ENCODE measurements at regions of chr1 and their contacts with region 1.

Region 1: GRCh38 chr1:36450270-36450918 is at the start of gene OSCP1:
- DNase-seq: peak; percentile 91
- ATAC-seq: peak; percentile 98
- H3K4me3 Mint-ChIP-seq: peak within 1 kb of the TSS; percentile 83
- H3K27ac Mint-ChIP-seq: peak within 1 kb of the TSS; percentile 83
- H3K4me1 Mint-ChIP-seq: peaks cover 16% of the 10 kb centered on the region
- H3K27me3 Mint-ChIP-seq: no peaks in the 10 kb centered on the region
- total RNA-seq, gene OSCP1: 2.2 to 2.8 TPM

Region 2: GRCh38 chr1:35577071-35577998 is 873.1 kb before region 1 on chr1:
- CTCF ChIA-PET with region 1: no interaction called
- POLR2A ChIA-PET with region 1: no interaction called
- intact Hi-C with region 1: loop called in 1 of 2 experiments (anchors 10 kb)
- DNase-seq: peak; percentile 74
- ATAC-seq: peak; percentile 83
- H3K4me3 Mint-ChIP-seq: peak overlapping the region; percentile 63
- H3K27ac Mint-ChIP-seq: peak overlapping the region; percentile 80
- H3K4me1 Mint-ChIP-seq: peaks cover 20% of the 10 kb centered on the region
- H3K27me3 Mint-ChIP-seq: peaks cover 12% of the 10 kb centered on the region

Region 3: DNA sequence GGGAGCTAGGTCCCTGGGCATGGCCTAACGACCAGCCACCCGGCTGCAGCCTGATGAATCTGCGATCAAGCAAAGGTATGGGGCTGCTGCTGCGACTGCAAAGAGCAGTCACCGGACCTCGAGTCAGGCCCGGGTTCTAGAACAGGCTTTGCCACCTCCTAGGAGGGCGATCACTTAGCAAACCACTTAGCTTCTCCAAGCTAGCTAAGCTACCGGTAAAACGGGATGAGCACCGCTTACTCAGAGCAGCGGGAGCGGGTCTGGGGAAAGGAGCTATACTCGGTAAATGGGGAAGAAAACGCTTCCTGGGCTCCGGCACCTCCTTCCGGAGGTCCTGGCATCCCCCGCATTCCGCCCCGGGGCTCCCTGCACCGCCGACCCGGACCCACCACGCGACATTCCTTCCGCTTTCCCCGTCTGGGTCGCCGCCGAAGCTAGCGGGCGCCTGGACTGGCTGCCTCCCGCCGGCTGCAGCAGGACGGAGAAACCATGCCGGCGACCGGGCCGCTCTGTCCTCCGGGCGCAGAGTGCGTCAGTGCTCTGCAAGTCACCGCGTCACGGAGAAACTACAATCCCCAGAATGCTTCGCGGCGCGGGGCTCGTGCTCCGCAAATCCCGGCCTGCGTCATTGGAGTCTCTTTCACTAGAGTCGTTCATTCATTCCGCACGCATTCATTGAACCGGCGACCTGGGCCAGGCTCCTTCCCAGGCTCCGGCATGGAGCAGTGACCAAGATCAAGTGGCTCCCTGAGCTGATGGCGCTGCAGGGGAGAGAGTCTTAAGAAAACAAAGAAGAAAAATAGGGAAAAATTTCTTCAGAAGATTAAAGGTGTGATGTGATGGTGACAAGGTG is 52.8 kb before region 1 on chr1 and contains the start of gene LSM10:
- CTCF ChIA-PET with region 1: no interaction called
- POLR2A ChIA-PET with region 1: no interaction called
- intact Hi-C with region 1: loop called in 1 of 2 experiments (anchors 1 kb)
- DNase-seq: peak; percentile 96
- ATAC-seq: peak; percentile 89
- H3K4me3 Mint-ChIP-seq: peak within 1 kb of the TSS; percentile 90
- H3K27ac Mint-ChIP-seq: peak within 1 kb of the TSS; percentile 99
- H3K4me1 Mint-ChIP-seq: peaks cover 25% of the 10 kb centered on the region
- H3K27me3 Mint-ChIP-seq: no peaks in the 10 kb centered on the region
- total RNA-seq, gene LSM10: 40.6 to 44.0 TPM

Region 4: DNA sequence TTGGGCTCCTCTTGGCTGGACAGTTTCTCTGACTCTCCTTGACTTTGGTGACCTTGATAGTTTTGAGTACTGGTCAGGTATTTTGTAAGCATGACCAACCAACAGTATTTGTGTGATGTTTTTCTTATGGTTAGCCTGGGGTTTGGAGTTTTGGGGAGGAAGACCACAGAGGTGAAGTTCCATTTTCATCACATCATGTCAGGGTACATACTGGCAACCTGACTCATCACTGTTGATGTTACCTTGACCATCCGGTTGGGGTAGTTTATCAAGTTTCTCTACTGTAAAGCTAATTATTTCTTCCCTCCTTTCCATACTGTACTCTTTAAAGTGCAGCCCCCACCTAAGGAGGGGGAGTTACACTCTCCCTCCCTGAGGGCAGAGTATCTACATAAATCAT is 13.6 kb before region 1 on chr1:
- CTCF ChIA-PET with region 1: no interaction called
- POLR2A ChIA-PET with region 1: no interaction called
- intact Hi-C with region 1: no loop called
- DNase-seq: no peak
- ATAC-seq: no peak
- H3K4me3 Mint-ChIP-seq: no peak overlapping the region
- H3K27ac Mint-ChIP-seq: no peak overlapping the region
- H3K4me1 Mint-ChIP-seq: no peaks in the 10 kb centered on the region
- H3K27me3 Mint-ChIP-seq: no peaks in the 10 kb centered on the region